ENCODE measurements at regions of chr3 and their contacts with region 1.

Region 1: DNA sequence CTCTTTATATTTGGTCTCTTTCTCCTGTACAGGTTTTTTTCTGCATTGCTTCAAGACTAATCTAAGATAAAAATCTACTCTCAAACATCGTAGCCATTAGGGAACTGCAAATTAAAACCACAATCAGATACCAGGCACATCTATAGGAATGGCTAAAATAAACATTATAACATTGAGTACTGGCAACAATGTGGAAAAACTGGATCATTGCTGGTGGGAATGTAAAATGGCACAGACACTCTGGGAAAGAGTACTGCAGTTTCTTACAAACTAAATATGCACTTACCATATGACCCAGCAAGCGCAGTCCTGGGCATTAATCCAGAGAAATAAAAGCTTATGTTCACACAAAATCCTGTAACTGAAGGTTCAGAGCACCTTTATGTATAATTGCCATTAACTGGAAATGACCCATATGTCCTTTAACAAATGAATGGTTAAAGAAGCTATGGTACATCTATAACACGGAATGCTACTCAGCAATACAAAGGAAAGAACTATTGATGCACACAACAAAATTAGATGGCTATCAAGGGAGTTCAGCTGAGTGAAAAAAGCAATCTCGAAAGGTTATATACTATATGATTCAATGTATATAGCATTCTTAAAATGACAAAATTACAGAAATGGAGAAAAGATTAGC is 6.3 kb downstream of the ABCC5 start:
- DNase-seq: no peak
- H3K4me3 ChIP-seq: no peak overlapping the region
- H3K27ac ChIP-seq: no peak overlapping the region
- H3K4me1 ChIP-seq: peaks cover 15 to 50% (median 36%) of the 10 kb centered on the region in 4 donors
- H3K27me3 ChIP-seq: no peaks in the 10 kb centered on the region
- CTCF ChIP-seq: no peak
- EP300 ChIP-seq: no peak
- POLR2A ChIP-seq: no peak

Region 2: GRCh38 chr3:183904833-183905780 is 106.2 kb before region 1 on chr3:
- intact Hi-C with region 1: loop called (anchors 5 kb)
- DNase-seq: peak in 1 of 2 donors; percentile 45
- H3K4me3 ChIP-seq: no peak overlapping the region
- H3K27ac ChIP-seq: no peak overlapping the region
- H3K4me1 ChIP-seq: no peaks in the 10 kb centered on the region
- H3K27me3 ChIP-seq: peaks cover 0 to 12% (median 0%) of the 10 kb centered on the region in 3 donors
- CTCF ChIP-seq: no peak
- EP300 ChIP-seq: no peak
- POLR2A ChIP-seq: no peak